PC-9 (cell line): ENCODE measurements at regions of chr18 and their contacts with region 1.

Region 1: DNA sequence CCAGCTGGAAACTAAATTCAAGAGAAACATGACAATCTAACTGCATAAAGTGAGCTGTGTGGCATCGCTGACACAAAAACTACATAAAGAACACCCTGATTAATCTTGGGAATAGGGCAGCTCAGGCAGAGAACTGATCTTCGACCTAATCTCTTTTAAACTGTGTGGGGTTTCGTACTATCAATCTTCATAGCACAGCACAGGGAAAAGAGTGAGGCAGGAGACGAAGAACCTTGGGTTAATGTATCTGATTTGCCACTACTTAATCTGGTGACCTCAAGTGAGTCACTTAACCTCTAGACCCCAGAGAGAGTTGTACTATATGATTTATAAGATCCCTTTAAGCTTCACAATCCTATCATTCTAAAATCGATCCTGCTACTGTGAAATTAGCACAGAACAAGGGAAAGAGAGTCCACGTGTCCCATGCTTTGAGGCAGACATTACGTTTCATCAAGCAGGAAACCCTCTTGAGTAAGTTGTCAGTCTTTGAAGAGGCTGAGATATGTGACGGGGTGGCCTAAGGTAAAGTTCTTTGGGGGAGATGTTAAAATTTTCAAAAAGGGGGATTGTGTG is 519.7 kb downstream of the SOCS6 start:
- DNase-seq: no peak
- H3K4me3 ChIP-seq: no peak overlapping the region
- H3K27ac ChIP-seq: no peak overlapping the region
- H3K4me1 ChIP-seq: no peaks in the 10 kb centered on the region
- H3K27me3 ChIP-seq: no peaks in the 10 kb centered on the region
- CTCF ChIP-seq: no peak

Region 2: GRCh38 chr18:70827632-70828031 is 19.1 kb after region 1 on chr18:
- CTCF ChIA-PET with region 1: no interaction called
- POLR2A ChIA-PET with region 1: no interaction called
- intact Hi-C with region 1: loop called (anchors 1 kb)
- DNase-seq: no peak
- H3K4me3 ChIP-seq: no peak overlapping the region
- H3K27ac ChIP-seq: no peak overlapping the region
- H3K4me1 ChIP-seq: no peaks in the 10 kb centered on the region
- H3K27me3 ChIP-seq: no peaks in the 10 kb centered on the region
- CTCF ChIP-seq: no peak